ENCODE measurements at regions of chr15 and their contacts with region 1.

Region 1: GRCh38 chr15:58227706-58228543 is 89.7 kb downstream of the AQP9 start:
- DNase-seq: peak; percentile 87
- H3K4me3 Mint-ChIP-seq: peak overlapping the region; percentile 8
- H3K27ac Mint-ChIP-seq: peak overlapping the region; percentile 62
- H3K4me1 Mint-ChIP-seq: peaks cover 46% of the 10 kb centered on the region
- H3K27me3 Mint-ChIP-seq: no peaks in the 10 kb centered on the region
- CTCF ChIP-seq: peak; percentile 94

Region 2: DNA sequence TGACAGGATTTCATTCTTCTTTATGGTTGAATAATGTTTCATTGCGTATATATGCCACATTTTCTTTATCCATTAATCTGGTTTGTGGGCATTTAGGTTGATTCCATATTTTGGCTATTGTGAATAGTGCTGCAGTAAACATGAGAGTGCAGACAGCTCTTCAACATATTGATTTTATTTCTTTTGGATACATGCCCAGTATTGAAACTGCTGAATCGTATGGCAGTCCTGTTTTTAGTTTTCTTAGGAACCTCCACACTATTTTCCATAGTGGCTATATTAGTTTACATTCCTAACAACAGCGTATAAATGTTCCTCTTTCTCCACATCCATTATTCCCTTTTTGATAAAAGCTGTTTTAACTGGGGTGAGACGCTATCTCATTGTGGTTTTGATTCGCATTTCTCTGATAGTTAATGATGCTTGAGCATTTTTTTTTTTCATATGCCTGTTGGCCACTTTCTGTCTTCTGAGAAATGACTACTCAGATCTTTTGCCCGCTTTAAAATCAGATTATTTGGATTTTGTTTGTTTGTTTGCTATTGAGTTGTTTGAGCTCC is 68.0 kb before region 1 on chr15:
- CTCF ChIA-PET with region 1: no interaction called
- intact Hi-C with region 1: no loop called
- DNase-seq: no peak
- H3K4me3 Mint-ChIP-seq: no peak overlapping the region
- H3K27ac Mint-ChIP-seq: no peak overlapping the region
- H3K4me1 Mint-ChIP-seq: no peaks in the 10 kb centered on the region
- H3K27me3 Mint-ChIP-seq: peaks cover 59% of the 10 kb centered on the region
- CTCF ChIP-seq: no peak

Region 3: GRCh38 chr15:58331903-58332675 is 104.2 kb after region 1 on chr15:
- CTCF ChIA-PET with region 1: no interaction called
- intact Hi-C with region 1: loop called (anchors 2 kb)
- DNase-seq: peak; percentile 98
- H3K4me3 Mint-ChIP-seq: peak overlapping the region; percentile 51
- H3K27ac Mint-ChIP-seq: peak overlapping the region; percentile 99
- H3K4me1 Mint-ChIP-seq: peaks cover 58% of the 10 kb centered on the region
- H3K27me3 Mint-ChIP-seq: no peaks in the 10 kb centered on the region
- CTCF ChIP-seq: no peak

Region 4: GRCh38 chr15:58758138-58758537 is 530.2 kb after region 1 on chr15:
- CTCF ChIA-PET with region 1: interaction called, 3 read pairs
- intact Hi-C with region 1: loop called (anchors 2 kb)
- DNase-seq: peak; percentile 33
- H3K4me3 Mint-ChIP-seq: no peak overlapping the region
- H3K27ac Mint-ChIP-seq: no peak overlapping the region
- H3K4me1 Mint-ChIP-seq: peaks cover 12% of the 10 kb centered on the region
- H3K27me3 Mint-ChIP-seq: no peaks in the 10 kb centered on the region
- CTCF ChIP-seq: no peak

Region 5: DNA sequence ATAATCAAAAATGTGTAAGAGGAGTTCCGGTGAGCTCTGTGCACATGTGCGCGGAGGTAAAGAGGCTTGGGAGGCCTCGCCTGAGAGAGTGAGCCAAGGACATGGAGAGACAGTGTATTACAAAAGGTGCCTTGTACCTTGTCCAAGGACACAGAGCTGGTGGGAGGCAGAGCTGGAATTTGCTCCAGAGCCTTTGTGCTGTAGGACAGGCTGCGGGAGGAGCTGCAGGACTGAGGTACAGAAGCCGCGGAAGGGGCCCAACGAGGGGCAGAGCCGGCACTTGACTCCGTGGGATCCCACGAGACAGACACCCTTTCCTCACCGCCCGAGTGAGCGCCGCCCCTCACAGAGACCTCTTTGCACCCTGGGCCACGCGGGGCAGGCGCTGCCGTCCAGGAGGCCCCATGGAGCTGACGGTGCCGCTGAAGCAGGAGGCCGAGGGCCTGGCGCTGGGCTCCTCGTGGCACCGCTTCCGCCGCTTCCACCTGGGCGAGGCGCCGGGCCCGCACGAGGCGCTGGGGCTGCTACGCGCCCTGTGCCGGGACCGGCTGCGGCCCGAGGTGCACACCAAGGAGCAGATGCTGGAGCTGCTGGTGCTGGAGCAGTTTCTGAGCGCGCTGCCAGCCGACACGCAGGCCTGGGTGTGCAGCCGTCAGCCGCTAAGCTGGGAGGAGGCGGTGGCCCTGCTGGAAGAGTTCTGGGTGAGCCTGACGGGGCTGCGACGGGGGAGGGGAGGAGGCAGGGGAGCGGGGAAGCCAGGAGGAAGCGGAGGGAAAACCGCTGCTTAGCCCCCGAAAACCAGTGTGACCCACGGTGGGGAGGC is 636.9 kb after region 1 on chr15:
- CTCF ChIA-PET with region 1: interaction called, 5 read pairs
- intact Hi-C with region 1: loop called (anchors 10 kb)
- DNase-seq: peak; percentile 81
- H3K4me3 Mint-ChIP-seq: peak overlapping the region; percentile 72
- H3K27ac Mint-ChIP-seq: peak overlapping the region; percentile 93
- H3K4me1 Mint-ChIP-seq: peaks cover 41% of the 10 kb centered on the region
- H3K27me3 Mint-ChIP-seq: no peaks in the 10 kb centered on the region
- CTCF ChIP-seq: no peak

Region 6: DNA sequence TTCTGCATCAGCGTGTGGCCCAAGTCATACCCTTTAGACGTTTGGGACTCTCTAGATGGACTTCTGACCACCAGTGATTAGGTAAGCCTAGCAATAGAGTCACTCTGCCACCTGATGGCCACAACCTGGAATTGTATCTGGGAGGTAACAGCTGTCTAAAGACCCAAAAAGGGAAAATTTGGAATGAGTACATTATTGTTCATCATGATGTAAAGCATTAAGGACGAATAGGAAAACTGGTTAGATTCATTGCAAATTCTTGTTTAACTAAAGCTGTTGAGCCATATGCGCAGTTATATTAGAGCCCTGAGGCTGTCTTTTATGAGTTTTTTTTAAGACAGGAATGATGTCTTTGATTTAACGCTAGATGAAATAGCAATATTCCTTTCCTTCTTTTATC is 1273.7 kb after region 1 on chr15:
- CTCF ChIA-PET with region 1: no interaction called
- intact Hi-C with region 1: loop called (anchors 5 kb)
- DNase-seq: peak; percentile 76
- H3K4me3 Mint-ChIP-seq: no peak overlapping the region
- H3K27ac Mint-ChIP-seq: no peak overlapping the region
- H3K4me1 Mint-ChIP-seq: no peaks in the 10 kb centered on the region
- H3K27me3 Mint-ChIP-seq: no peaks in the 10 kb centered on the region
- CTCF ChIP-seq: peak; percentile 84